Caco-2 (cell line): ENCODE measurements at regions of chr5 and their contacts with region 1.

Region 1: GRCh38 chr5:139711067-139711905 is 63.1 kb downstream of the CXXC5 start:
- DNase-seq: peak; percentile 66 to 68
- H3K4me3 ChIP-seq: peak overlapping the region; percentile 53
- H3K4me3 Mint-ChIP-seq: peak overlapping the region; percentile 75
- H3K27ac Mint-ChIP-seq: peak overlapping the region; percentile 88
- H3K4me1 ChIP-seq: peaks cover 31% of the 10 kb centered on the region
- H3K4me1 Mint-ChIP-seq: peaks cover 15% of the 10 kb centered on the region
- H3K27me3 ChIP-seq: no peaks in the 10 kb centered on the region
- H3K27me3 Mint-ChIP-seq: no peaks in the 10 kb centered on the region
- CTCF ChIP-seq: peak; percentile 25 to 63

Region 2: GRCh38 chr5:139524932-139525585 is 186.2 kb before region 1 on chr5:
- CTCF ChIA-PET with region 1: no interaction called
- POLR2A ChIA-PET with region 1: no interaction called
- intact Hi-C with region 1: no loop called
- DNase-seq: no peak
- H3K4me3 ChIP-seq: no peak overlapping the region
- H3K4me3 Mint-ChIP-seq: no peak overlapping the region
- H3K27ac Mint-ChIP-seq: no peak overlapping the region
- H3K4me1 ChIP-seq: peaks cover 5% of the 10 kb centered on the region; the same call in 1 of the 2 replicates
- H3K4me1 Mint-ChIP-seq: no peaks in the 10 kb centered on the region
- H3K27me3 ChIP-seq: no peaks in the 10 kb centered on the region
- H3K27me3 Mint-ChIP-seq: no peaks in the 10 kb centered on the region
- CTCF ChIP-seq: no peak

Region 3: GRCh38 chr5:139648205-139649081 is 62.8 kb before region 1 on chr5 and contains the start of gene CXXC5:
- CTCF ChIA-PET with region 1: interaction called, 4 read pairs
- POLR2A ChIA-PET with region 1: interaction called, 15 read pairs
- intact Hi-C with region 1: no loop called
- DNase-seq: peak; percentile 88 to 90
- H3K4me3 ChIP-seq: peak within 1 kb of the TSS; percentile 91
- H3K4me3 Mint-ChIP-seq: peak within 1 kb of the TSS; percentile 93
- H3K27ac Mint-ChIP-seq: no peak within 1 kb of the TSS
- H3K4me1 ChIP-seq: peaks cover 58% of the 10 kb centered on the region
- H3K4me1 Mint-ChIP-seq: peaks cover 48% of the 10 kb centered on the region
- H3K27me3 ChIP-seq: no peaks in the 10 kb centered on the region
- H3K27me3 Mint-ChIP-seq: no peaks in the 10 kb centered on the region
- CTCF ChIP-seq: no peak
- total RNA-seq, gene CXXC5: 79.5 and 92.3 TPM in 2 replicates

Region 4: DNA sequence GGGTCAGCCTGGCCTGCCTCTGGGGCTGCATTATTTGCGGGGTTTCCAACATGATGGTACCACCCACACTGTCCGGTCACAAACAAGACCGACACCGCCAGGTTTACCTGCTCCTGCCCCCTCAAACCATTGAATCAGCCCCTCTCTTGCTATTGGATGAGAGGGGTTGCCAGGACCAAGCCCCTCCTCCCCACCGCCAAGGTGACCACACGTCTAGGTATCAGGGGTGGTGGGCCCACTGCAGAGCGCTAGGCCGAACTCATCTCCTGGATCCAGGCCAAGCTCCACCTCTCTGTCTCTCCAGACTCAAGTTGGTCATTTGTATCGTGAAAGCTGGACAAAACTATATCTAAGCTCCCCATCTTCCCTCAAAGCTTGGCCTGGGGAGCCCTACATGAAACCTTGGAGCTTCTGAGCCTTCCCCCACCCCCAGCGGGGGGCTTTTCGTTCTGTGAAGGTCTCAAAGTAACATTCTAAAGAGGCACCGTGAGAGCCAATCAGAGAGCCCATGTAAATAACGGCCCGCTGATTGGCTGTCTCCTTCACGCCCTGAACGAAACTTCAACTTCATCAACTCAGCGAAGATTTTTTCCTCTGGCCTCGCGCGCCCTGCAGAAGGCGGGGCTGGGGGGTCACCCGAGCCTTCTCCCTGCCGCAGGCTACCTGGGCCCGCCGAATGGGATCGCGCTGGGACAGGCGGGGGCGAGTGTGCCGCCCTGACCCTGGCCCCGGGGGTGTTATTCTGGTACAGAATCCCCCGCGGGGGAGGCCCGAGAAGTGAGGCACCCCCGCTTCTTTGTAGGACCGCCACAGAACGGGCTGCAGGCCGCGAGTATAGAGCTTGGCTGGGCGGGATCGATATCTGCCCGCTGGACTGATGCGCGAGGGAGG is 34.8 kb after region 1 on chr5:
- CTCF ChIA-PET with region 1: interaction called, 5 read pairs
- POLR2A ChIA-PET with region 1: interaction called, 8 read pairs
- intact Hi-C with region 1: loop called (anchors 2 kb)
- DNase-seq: peak; percentile 82 to 86
- H3K4me3 ChIP-seq: peak overlapping the region; percentile 55
- H3K4me3 Mint-ChIP-seq: peak overlapping the region; percentile 92
- H3K27ac Mint-ChIP-seq: no peak overlapping the region
- H3K4me1 ChIP-seq: peaks cover 17% of the 10 kb centered on the region
- H3K4me1 Mint-ChIP-seq: peaks cover 31% of the 10 kb centered on the region
- H3K27me3 ChIP-seq: no peaks in the 10 kb centered on the region
- H3K27me3 Mint-ChIP-seq: no peaks in the 10 kb centered on the region
- CTCF ChIP-seq: no peak